Activated CD8-positive, alpha-beta T cell treated with anti-CD3 and anti-CD28 coated beads for 36 hours (primary cell): ENCODE measurements at regions of chr1 and their contacts with region 1.

Region 1: DNA sequence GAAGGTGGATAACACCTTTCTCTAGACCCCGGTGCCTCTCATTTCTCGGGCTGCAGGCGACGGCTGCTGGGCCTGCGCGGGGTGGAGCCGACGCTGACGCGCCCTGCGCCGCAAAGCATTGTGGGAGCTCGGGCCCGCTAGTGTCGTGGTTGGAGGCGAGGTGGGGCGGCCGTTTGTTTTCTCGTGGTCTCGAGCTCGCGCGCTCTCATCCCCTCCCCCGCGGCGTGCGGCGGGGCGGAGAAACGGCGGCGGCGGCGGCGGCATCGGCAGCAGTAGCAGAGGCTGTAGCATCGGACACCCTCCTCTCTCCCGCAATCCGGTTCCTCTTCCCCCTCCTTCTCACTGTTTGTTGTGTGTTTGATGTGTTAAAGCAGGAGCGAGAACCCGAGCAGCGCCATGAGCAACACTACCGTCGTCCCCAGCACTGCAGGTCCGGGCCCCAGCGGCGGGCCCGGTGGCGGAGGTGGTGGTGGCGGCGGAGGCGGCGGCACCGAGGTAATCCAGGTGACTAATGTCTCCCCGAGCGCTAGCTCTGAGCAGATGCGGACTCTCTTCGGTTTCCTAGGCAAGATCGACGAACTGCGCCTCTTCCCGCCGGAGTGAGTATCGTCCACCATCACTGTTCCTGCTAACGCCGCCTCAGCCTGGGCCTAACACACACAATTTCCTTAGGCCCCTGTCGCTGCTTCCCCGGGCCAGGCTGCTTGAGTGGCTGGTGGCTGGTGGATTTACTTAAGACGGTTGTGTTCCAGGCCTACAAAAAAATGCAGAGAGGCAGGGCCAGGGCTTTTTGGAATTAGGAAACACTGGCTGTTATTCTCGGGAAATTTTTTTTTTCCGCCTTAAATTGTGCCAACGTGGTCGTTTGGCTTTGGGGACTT is at the start of gene SRSF11:
- DNase-seq: peak; percentile 97
- ATAC-seq: peak; percentile 94
- H3K4me3 Mint-ChIP-seq: peak within 1 kb of the TSS; percentile 94
- H3K27ac Mint-ChIP-seq: peak within 1 kb of the TSS; percentile 98
- H3K4me1 Mint-ChIP-seq: peaks cover 41% of the 10 kb centered on the region
- H3K27me3 Mint-ChIP-seq: no peaks in the 10 kb centered on the region
- CTCF ChIP-seq: no peak
- total RNA-seq, gene SRSF11: 194 to 203 TPM

Region 2: DNA sequence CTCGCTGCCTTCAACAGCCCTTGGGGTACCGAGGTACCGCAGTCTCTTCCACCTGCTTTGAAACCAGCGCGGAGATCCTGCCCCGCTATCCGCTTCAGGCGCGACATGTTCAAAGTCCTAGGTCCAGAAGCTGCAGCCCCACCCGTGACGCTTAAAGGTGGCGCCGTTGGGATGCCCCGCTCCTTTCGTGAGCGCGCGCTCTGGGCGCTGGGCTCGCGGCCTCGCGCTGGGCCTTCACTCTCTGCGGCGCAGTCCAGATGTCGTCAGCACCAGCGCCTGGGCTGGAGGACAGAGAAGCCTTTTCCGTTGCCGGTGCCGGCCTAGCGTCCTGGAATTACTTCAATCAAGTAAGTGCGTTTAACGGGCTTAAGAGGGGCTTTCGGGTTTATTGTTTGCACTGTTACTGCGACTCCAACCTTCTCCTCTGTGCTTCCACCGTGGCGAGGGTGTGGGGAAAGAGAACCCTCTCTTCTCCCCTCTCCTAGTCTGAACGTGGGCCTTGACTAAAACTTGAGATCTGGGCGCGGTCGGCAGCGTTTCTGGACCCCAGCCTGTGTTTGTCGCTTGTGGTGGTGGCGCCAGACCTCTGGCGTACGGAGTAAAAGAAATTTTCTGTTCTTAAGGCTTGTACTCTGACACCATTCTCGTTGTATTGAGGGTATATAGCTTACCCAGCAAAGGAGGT is 15.9 kb before region 1 on chr1 and contains the start of gene LRRC40:
- CTCF ChIA-PET with region 1: interaction called, 9 read pairs
- POLR2A ChIA-PET with region 1: interaction called, 21 read pairs
- intact Hi-C with region 1: no loop called
- DNase-seq: peak; percentile 97
- ATAC-seq: peak; percentile 97
- H3K4me3 Mint-ChIP-seq: peak within 1 kb of the TSS; percentile 97
- H3K27ac Mint-ChIP-seq: peak within 1 kb of the TSS; percentile 99
- H3K4me1 Mint-ChIP-seq: peaks cover 55% of the 10 kb centered on the region
- H3K27me3 Mint-ChIP-seq: no peaks in the 10 kb centered on the region
- CTCF ChIP-seq: no peak
- total RNA-seq, gene LRRC40: 20.9 to 21.0 TPM

Region 3: GRCh38 chr1:70210820-70211219 is 10.7 kb before region 1 on chr1:
- CTCF ChIA-PET with region 1: interaction called, 9 read pairs
- POLR2A ChIA-PET with region 1: interaction called, 21 read pairs
- intact Hi-C with region 1: no loop called
- DNase-seq: no peak
- ATAC-seq: peak; percentile 29
- H3K4me3 Mint-ChIP-seq: no peak overlapping the region
- H3K27ac Mint-ChIP-seq: peak overlapping the region; percentile 66
- H3K4me1 Mint-ChIP-seq: peaks cover 40% of the 10 kb centered on the region
- H3K27me3 Mint-ChIP-seq: no peaks in the 10 kb centered on the region
- CTCF ChIP-seq: no peak

Region 4: GRCh38 chr1:70234733-70235132 is 13.3 kb after region 1 on chr1:
- CTCF ChIA-PET with region 1: no interaction called
- POLR2A ChIA-PET with region 1: interaction called, 14 read pairs
- intact Hi-C with region 1: no loop called
- DNase-seq: no peak
- ATAC-seq: no peak
- H3K4me3 Mint-ChIP-seq: no peak overlapping the region
- H3K27ac Mint-ChIP-seq: peak overlapping the region; percentile 30
- H3K4me1 Mint-ChIP-seq: peaks cover 8% of the 10 kb centered on the region
- H3K27me3 Mint-ChIP-seq: no peaks in the 10 kb centered on the region
- CTCF ChIP-seq: no peak

Region 5: GRCh38 chr1:70372426-70372825 is 150.9 kb after region 1 on chr1:
- CTCF ChIA-PET with region 1: no interaction called
- POLR2A ChIA-PET with region 1: no interaction called
- intact Hi-C with region 1: no loop called
- DNase-seq: no peak
- ATAC-seq: no peak
- H3K4me3 Mint-ChIP-seq: no peak overlapping the region
- H3K27ac Mint-ChIP-seq: no peak overlapping the region
- H3K4me1 Mint-ChIP-seq: no peaks in the 10 kb centered on the region
- H3K27me3 Mint-ChIP-seq: no peaks in the 10 kb centered on the region
- CTCF ChIP-seq: no peak